Mammary epithelial cell (primary cell): ENCODE measurements at regions of chrX and their contacts with region 1.

Region 1: DNA sequence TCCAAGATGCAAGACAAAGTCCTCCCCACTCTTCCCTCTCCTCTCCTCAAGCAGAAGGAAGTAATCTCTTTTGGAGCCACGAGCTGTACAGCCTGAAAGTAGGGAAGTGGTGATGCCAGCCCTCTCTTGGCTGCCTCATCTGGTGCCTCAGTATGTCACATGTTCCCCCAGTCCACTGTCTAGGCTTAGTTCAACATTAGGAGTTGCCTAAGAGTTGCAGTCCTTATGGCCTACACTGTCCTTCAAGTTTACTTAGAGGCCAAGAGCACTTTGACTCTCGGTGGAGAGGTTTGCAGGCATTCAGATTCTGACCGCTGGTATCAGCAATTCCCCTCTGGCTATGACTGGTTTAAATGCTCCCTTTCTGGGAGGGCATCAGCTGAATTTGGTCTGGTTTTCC is 735.6 kb downstream of the GLUD2 start:
- DNase-seq: no peak
- H3K4me3 ChIP-seq: no peak overlapping the region
- H3K27ac ChIP-seq: no peak overlapping the region
- H3K4me1 ChIP-seq: no peaks in the 10 kb centered on the region
- H3K27me3 ChIP-seq: no peaks in the 10 kb centered on the region
- CTCF ChIP-seq: no peak

Region 2: GRCh38 chrX:121635141-121635540 is 147.8 kb before region 1 on chrX:
- CTCF ChIA-PET with region 1: interaction called, 13 read pairs
- dilution Hi-C with region 1: no loop called
- in situ Hi-C with region 1: no loop called
- intact Hi-C with region 1: no loop called
- DNase-seq: peak; percentile 69
- H3K4me3 ChIP-seq: no peak overlapping the region
- H3K27ac ChIP-seq: no peak overlapping the region
- H3K4me1 ChIP-seq: no peaks in the 10 kb centered on the region
- H3K27me3 ChIP-seq: no peaks in the 10 kb centered on the region
- CTCF ChIP-seq: no peak

Region 3: GRCh38 chrX:121733514-121733913 is 49.5 kb before region 1 on chrX:
- CTCF ChIA-PET with region 1: no interaction called
- dilution Hi-C with region 1: no loop called
- in situ Hi-C with region 1: no loop called
- intact Hi-C with region 1: no loop called
- DNase-seq: peak; percentile 86
- H3K4me3 ChIP-seq: no peak overlapping the region
- H3K27ac ChIP-seq: no peak overlapping the region
- H3K4me1 ChIP-seq: no peaks in the 10 kb centered on the region
- H3K27me3 ChIP-seq: no peaks in the 10 kb centered on the region
- CTCF ChIP-seq: no peak

Region 4: GRCh38 chrX:121851033-121851432 is 68.1 kb after region 1 on chrX:
- CTCF ChIA-PET with region 1: no interaction called
- dilution Hi-C with region 1: no loop called
- in situ Hi-C with region 1: no loop called
- intact Hi-C with region 1: no loop called
- DNase-seq: peak; percentile 34
- H3K4me3 ChIP-seq: no peak overlapping the region
- H3K27ac ChIP-seq: no peak overlapping the region
- H3K4me1 ChIP-seq: no peaks in the 10 kb centered on the region
- H3K27me3 ChIP-seq: no peaks in the 10 kb centered on the region
- CTCF ChIP-seq: no peak